BJ (cell line): ENCODE measurements at regions of chr6 and their contacts with region 1.

Region 1: GRCh38 chr6:90478789-90479602 is 107.9 kb downstream of the MAP3K7 start:
- DNase-seq: peak; percentile 68
- H3K4me3 ChIP-seq: no peak overlapping the region
- H3K27me3 ChIP-seq: no peaks in the 10 kb centered on the region; the same call in 1 of the 2 replicates
- CTCF ChIP-seq: peak; percentile 79

Region 2: GRCh38 chr6:89940225-89941027 is 538.6 kb before region 1 on chr6:
- CTCF ChIA-PET with region 1: interaction called, 169 read pairs
- POLR2A ChIA-PET with region 1: no interaction called
- DNase-seq: no peak
- H3K4me3 ChIP-seq: no peak overlapping the region
- H3K27me3 ChIP-seq: peaks cover 2% of the 10 kb centered on the region; the same call in 1 of the 2 replicates
- CTCF ChIP-seq: peak; percentile 82

Region 3: DNA sequence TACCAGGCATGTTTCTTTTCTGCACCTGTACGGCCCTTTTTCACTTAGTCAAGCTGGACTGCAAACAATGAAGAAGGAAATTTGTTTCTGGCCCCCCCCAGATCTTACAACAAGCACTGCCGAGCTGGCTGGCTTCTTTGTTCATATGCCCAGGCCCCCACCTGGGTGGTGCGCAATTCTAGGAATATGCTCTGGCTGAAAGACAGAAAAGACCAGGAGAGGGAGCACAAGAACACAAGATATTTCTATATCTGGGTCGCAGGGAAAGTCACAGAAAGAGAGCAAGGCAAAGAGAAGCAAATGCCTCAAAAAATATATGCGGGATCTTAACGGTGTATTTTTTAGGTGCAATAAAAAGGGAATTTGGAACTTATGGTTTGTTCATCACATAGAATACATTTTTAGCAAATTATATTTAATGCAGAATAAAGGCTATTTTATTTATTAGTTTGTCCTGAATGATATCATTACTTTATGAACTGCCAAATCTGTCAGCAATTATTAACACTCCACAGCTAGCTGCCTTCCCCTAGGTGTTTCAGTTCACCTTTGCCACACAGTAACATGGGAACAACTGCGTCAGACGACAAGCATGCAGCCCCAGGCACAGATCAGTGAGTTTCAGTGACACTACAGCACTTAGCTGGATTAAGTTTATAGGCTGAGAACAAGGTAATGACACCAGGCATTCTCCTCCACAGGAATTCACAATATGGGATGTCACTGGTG is 508.2 kb before region 1 on chr6:
- CTCF ChIA-PET with region 1: interaction called, 21 read pairs
- POLR2A ChIA-PET with region 1: no interaction called
- DNase-seq: no peak
- H3K4me3 ChIP-seq: no peak overlapping the region
- H3K27me3 ChIP-seq: 0 out of 2 replicates have a peak, but pooled peaks cover 1% of the 10 kb centered on the region
- CTCF ChIP-seq: peak; percentile 71

Region 4: GRCh38 chr6:89977808-89978748 is 500.9 kb before region 1 on chr6:
- CTCF ChIA-PET with region 1: interaction called, 21 read pairs
- POLR2A ChIA-PET with region 1: no interaction called
- DNase-seq: peak; percentile 26
- H3K4me3 ChIP-seq: no peak overlapping the region
- H3K27me3 ChIP-seq: no peaks in the 10 kb centered on the region
- CTCF ChIP-seq: no peak

Region 5: GRCh38 chr6:90454836-90455427 is 24.1 kb before region 1 on chr6:
- CTCF ChIA-PET with region 1: interaction called, 12 read pairs
- POLR2A ChIA-PET with region 1: no interaction called
- DNase-seq: no peak
- H3K4me3 ChIP-seq: no peak overlapping the region
- H3K27me3 ChIP-seq: no peaks in the 10 kb centered on the region
- CTCF ChIP-seq: no peak

Region 6: DNA sequence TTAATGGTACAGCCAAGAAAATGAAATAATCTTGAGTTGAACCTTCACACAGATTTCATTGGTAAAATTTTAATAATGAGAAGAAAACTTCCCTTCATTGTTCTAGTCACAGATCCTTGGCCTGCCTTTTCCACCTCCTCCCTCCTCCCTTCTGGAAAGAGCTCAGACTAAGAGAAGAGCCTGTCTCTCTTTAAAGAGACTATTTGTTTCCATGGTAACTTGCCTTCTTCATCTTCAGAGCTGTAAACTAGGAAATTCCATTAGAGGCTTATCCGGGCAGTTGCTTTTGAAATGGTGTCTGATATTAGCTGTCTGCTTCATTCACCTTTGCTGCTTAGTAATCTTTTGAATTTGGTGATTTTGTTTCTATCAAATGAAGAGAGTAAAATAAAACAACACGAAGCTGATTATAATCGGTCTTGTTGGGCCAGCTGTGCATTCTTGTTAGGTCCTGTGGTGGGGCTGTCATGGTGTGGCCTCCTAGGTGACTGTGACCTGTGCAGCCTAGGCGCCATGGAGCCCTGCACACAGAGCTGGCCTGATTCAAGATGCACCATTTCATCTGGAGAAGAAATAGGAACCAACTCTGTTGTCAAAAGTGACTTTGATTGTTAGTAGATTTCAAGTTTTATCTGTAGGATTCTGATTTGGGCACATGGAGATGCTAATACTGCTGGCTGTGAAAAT is 11.2 kb after region 1 on chr6:
- CTCF ChIA-PET with region 1: interaction called, 13 read pairs
- POLR2A ChIA-PET with region 1: no interaction called
- DNase-seq: no peak
- H3K4me3 ChIP-seq: no peak overlapping the region
- H3K27me3 ChIP-seq: peaks cover 5% of the 10 kb centered on the region
- CTCF ChIP-seq: no peak